ENCODE measurements at regions of chr6 and their contacts with region 1.

Region 1: GRCh38 chr6:75460681-75461080 is 32.9 kb downstream of the FILIP1 start:
- DNase-seq: no peak
- H3K4me3 ChIP-seq: no peak overlapping the region
- H3K27ac ChIP-seq: peak overlapping the region; percentile 9 to 49
- H3K4me1 ChIP-seq: no peaks in the 10 kb centered on the region
- H3K27me3 ChIP-seq: no peaks in the 10 kb centered on the region
- CTCF ChIP-seq: no peak
- POLR2A ChIP-seq: no peak

Region 2: DNA sequence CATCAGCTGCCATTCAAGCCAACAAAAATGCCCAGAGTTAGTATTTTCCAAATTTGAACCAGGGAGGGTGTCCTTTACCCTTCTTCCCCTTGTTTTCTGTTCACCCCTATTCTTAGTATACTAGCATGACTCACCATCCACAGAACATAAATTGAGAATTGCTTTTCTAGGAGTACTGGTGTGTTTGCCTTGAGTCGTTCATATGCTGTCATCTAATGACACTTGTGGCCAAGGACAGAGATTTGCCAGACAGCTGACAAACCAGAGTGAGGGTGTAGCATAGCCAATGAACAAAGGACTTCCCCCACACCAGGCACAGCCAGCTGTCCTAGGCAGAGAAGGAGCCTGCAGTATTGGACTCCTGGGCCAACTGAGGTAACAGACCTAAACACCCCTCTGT is 29.3 kb before region 1 on chr6:
- intact Hi-C with region 1: no loop called
- DNase-seq: no peak
- H3K4me3 ChIP-seq: no peak overlapping the region
- H3K27ac ChIP-seq: no peak overlapping the region
- H3K4me1 ChIP-seq: no peaks in the 10 kb centered on the region
- H3K27me3 ChIP-seq: no peaks in the 10 kb centered on the region
- CTCF ChIP-seq: no peak
- POLR2A ChIP-seq: no peak

Region 3: GRCh38 chr6:75481936-75482593 is 21.4 kb after region 1 on chr6:
- intact Hi-C with region 1: loop called (anchors 2 kb)
- DNase-seq: no peak
- H3K4me3 ChIP-seq: no peak overlapping the region
- H3K27ac ChIP-seq: peak overlapping the region; percentile 70 to 86
- H3K4me1 ChIP-seq: no peaks in the 10 kb centered on the region
- H3K27me3 ChIP-seq: no peaks in the 10 kb centered on the region
- CTCF ChIP-seq: no peak
- POLR2A ChIP-seq: no peak

Region 4: DNA sequence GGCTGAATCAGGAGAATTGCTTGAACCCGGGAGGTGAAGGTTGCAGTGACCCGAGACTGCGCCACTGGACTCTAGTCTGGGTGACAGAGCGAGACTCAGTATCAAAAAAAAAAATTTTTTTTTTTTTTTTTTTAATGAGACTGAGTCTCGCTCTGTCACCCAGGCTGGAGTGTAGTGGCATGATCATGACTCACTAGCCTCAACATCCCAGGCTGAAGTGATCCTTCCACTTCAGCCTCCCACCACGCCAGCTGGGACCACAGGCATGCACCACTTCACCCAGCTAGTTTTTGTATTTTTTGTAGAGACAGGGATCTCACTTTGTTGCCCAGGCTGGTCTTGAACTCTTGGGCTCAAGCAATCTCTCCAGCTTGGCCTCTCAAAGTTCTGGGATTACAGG is 341.7 kb after region 1 on chr6:
- intact Hi-C with region 1: no loop called
- DNase-seq: no peak
- H3K4me3 ChIP-seq: no peak overlapping the region
- H3K27ac ChIP-seq: no peak overlapping the region
- H3K4me1 ChIP-seq: no peaks in the 10 kb centered on the region
- H3K27me3 ChIP-seq: no peaks in the 10 kb centered on the region
- CTCF ChIP-seq: no peak
- POLR2A ChIP-seq: no peak

Region 5: DNA sequence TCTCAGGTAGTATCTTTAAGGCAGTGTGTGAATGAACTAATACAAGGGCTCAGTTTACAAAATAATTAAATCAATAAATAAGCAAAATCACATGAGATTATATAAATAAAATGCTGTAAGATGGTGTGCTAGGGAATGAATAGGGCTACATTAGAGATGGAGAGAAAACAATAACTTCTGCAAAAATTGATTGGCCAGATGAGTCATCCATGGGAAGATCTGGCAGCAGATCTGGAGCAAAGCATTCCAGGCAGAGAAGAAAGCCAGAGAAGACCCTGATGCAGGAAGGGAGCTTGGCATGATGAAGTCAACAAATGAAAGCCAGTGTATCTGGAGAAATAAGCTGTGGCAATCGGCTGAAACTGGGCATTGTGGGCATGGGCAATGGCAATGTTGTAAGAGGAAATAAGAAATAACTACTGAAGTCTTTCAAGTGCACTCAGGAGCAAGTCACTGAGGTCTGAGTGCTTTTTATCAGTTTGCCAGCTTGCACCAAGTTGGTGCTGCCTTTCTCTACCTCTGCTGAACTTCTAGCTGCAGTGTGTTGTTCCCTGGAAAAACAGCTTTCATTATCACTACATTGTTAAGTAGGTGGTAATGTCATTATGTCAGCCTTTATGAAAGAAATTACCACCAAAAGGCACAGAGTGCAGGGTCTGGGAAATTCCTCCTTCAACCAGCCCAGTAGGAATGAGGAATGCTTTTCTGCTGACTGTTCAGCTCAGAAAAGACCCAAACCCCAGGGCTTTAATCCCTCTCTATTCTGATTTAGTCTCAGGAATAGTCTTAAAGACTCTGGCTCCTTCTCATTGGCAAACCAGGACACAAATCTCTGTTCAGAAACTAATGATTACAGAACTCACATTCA is 1771.0 kb after region 1 on chr6:
- intact Hi-C with region 1: no loop called
- DNase-seq: no peak
- H3K4me3 ChIP-seq: no peak overlapping the region
- H3K27ac ChIP-seq: no peak overlapping the region
- H3K4me1 ChIP-seq: no peaks in the 10 kb centered on the region
- H3K27me3 ChIP-seq: no peaks in the 10 kb centered on the region
- CTCF ChIP-seq: no peak
- POLR2A ChIP-seq: no peak

Measured in breast epithelium (tissue), 4 donors.